Activated CD4-positive, alpha-beta memory T cell treated with anti-CD3 and anti-CD28 coated beads for 36 hours (primary cell): ENCODE measurements at regions of chr17 and their contacts with region 1.

Region 1: DNA sequence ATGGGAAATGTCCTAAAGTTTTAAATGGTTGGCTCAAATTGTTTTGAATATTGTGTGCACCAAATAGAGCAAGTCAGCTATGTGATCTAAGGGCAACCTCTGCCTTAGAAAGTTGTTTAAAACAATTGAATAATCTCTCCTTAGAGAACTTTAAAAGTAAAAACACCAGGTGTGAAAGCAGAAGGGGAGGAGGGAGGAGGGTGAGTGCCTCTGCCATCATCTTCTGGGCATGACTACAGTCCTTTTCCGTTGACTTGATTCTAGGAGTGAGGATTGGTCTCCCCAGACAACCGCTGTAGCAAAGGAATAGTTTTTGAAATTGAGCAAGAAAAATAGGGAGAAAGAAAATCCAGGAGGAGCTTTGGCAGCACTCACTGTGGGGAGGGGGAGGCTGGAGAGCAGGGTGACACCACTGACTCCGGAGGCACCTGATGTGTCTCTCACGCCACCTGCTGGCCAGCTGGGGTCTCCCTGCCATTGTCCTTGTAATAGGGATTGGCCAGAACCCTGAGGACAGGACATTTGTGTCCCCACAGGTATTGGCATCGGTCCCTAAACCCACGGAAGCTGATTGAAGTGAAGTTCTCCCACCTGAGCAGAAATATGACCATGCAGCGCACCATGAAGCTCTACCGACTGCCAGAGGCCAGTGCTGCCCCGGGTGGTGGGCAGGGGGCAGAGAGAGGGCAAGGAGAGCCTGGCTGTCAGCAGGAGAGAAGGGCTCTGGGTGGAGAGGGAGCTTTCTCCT is 33.3 kb downstream of the PLCD3 start:
- DNase-seq: peak; percentile 85
- H3K4me3 Mint-ChIP-seq: no peak overlapping the region
- H3K27ac Mint-ChIP-seq: no peak overlapping the region
- H3K4me1 Mint-ChIP-seq: no peaks in the 10 kb centered on the region
- H3K27me3 Mint-ChIP-seq: no peaks in the 10 kb centered on the region

Region 2: GRCh38 chr17:44919885-44920564 is 179.0 kb before region 1 on chr17:
- CTCF ChIA-PET with region 1: interaction called, 17 read pairs
- POLR2A ChIA-PET with region 1: no interaction called
- intact Hi-C with region 1: no loop called
- DNase-seq: peak; percentile 85
- H3K4me3 Mint-ChIP-seq: no peak overlapping the region
- H3K27ac Mint-ChIP-seq: no peak overlapping the region
- H3K4me1 Mint-ChIP-seq: peaks cover 5% of the 10 kb centered on the region
- H3K27me3 Mint-ChIP-seq: peaks cover 10% of the 10 kb centered on the region

Region 3: GRCh38 chr17:44981221-44981968 is 117.6 kb before region 1 on chr17:
- CTCF ChIA-PET with region 1: no interaction called
- POLR2A ChIA-PET with region 1: no interaction called
- intact Hi-C with region 1: no loop called
- DNase-seq: peak; percentile 44
- H3K4me3 Mint-ChIP-seq: no peak overlapping the region
- H3K27ac Mint-ChIP-seq: peak overlapping the region; percentile 25
- H3K4me1 Mint-ChIP-seq: peaks cover 2% of the 10 kb centered on the region
- H3K27me3 Mint-ChIP-seq: peaks cover 37% of the 10 kb centered on the region

Region 4: GRCh38 chr17:45031231-45032173 is 67.5 kb before region 1 on chr17:
- CTCF ChIA-PET with region 1: no interaction called
- POLR2A ChIA-PET with region 1: no interaction called
- intact Hi-C with region 1: loop called (anchors 5 kb)
- DNase-seq: no peak
- H3K4me3 Mint-ChIP-seq: no peak overlapping the region
- H3K27ac Mint-ChIP-seq: no peak overlapping the region
- H3K4me1 Mint-ChIP-seq: no peaks in the 10 kb centered on the region
- H3K27me3 Mint-ChIP-seq: no peaks in the 10 kb centered on the region

Region 5: GRCh38 chr17:45060797-45061605 is 38.0 kb before region 1 on chr17 and contains the start of gene NMT1:
- CTCF ChIA-PET with region 1: interaction called, 12 read pairs
- POLR2A ChIA-PET with region 1: no interaction called
- intact Hi-C with region 1: no loop called
- DNase-seq: peak; percentile 98
- H3K4me3 Mint-ChIP-seq: peak within 1 kb of the TSS; percentile 100
- H3K27ac Mint-ChIP-seq: peak within 1 kb of the TSS; percentile 100
- H3K4me1 Mint-ChIP-seq: peaks cover 48% of the 10 kb centered on the region
- H3K27me3 Mint-ChIP-seq: no peaks in the 10 kb centered on the region
- total RNA-seq, gene NMT1: 158 TPM